Activated T-helper 2 cell treated with anti-CD3 and anti-CD28 coated beads, Interferon-gamma antibody, Interleukin-2, Interleukin-4, amounts not matched to agents 10 μg/mL and 5 μg/mL and 100 μg/mL, durations not matched to agents 14 hours and 24 hours and 36 hours (primary cell): ENCODE measurements at regions of chr11 and their contacts with region 1.

Region 1: GRCh38 chr11:47766305-47767227 is 575 bp downstream of the FNBP4 start:
- DNase-seq: peak; percentile 75
- H3K4me3 Mint-ChIP-seq: peak overlapping the region; percentile 99
- H3K27ac Mint-ChIP-seq: peak overlapping the region; percentile 99
- H3K4me1 Mint-ChIP-seq: peaks cover 14% of the 10 kb centered on the region
- H3K27me3 Mint-ChIP-seq: no peaks in the 10 kb centered on the region

Region 2: GRCh38 chr11:47269002-47269828 is 497.4 kb before region 1 on chr11:
- intact Hi-C with region 1: loop called (anchors 1 kb)
- DNase-seq: peak; percentile 80
- H3K4me3 Mint-ChIP-seq: peak overlapping the region; percentile 84
- H3K27ac Mint-ChIP-seq: peak overlapping the region; percentile 97
- H3K4me1 Mint-ChIP-seq: peaks cover 53% of the 10 kb centered on the region
- H3K27me3 Mint-ChIP-seq: no peaks in the 10 kb centered on the region

Region 3: DNA sequence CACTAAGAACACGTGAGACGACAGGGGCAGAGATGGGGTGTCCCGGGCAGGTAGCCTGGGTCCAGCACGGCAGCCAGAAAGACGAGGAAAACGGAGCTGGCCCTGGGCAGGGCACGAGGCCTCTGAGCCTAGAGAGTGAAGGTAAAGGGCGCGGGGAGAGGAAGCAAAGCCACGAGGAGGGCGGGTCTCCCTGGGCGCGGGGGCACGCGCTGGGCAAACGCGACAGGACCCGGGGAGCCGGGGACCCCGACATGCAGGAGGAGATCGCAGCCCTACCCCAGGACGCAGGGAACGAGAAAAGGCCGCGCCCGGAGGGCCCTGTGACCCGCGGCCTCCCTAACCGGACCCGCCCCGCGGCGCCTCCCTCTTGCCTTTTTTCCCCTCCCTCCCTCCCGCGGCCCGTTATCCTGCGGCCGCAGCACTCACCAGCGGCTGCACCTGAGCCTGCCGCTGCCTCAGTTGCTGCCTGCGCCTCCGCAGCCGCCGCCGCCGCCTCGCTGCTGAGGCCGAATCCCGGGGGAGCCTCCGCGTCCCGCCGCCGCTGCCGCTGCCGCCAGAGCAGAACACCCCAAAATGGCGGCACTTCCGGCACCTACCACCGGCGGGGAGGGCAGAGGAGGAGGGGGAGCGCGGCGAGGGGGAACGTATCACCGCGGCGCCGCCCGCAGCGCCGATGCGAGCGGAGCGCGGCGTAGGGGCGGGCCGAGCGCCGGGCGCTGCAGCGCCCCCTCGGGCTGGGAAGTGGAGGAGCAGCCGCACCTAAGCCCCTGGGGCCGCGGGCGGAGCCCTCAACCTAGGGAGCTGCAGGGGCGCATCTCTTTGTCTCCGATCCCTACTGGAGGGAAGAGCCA is 213.8 kb before region 1 on chr11 and contains the start of gene CELF1:
- intact Hi-C with region 1: loop called (anchors 2 kb)
- DNase-seq: peak; percentile 92
- H3K4me3 Mint-ChIP-seq: peak within 1 kb of the TSS; percentile 100
- H3K27ac Mint-ChIP-seq: peak within 1 kb of the TSS; percentile 95
- H3K4me1 Mint-ChIP-seq: peaks cover 31% of the 10 kb centered on the region
- H3K27me3 Mint-ChIP-seq: no peaks in the 10 kb centered on the region
- total RNA-seq, gene CELF1: 129 and 132 TPM in 2 replicates

Region 4: GRCh38 chr11:47715082-47715669 is 51.4 kb before region 1 on chr11 and contains the start of gene AGBL2:
- intact Hi-C with region 1: loop called (anchors 2 kb)
- DNase-seq: peak; percentile 83
- H3K4me3 Mint-ChIP-seq: peak within 1 kb of the TSS; percentile 92
- H3K27ac Mint-ChIP-seq: peak within 1 kb of the TSS; percentile 95
- H3K4me1 Mint-ChIP-seq: peaks cover 21% of the 10 kb centered on the region
- H3K27me3 Mint-ChIP-seq: no peaks in the 10 kb centered on the region
- total RNA-seq, gene AGBL2: 3.6 and 5.1 TPM in 2 replicates

Region 5: DNA sequence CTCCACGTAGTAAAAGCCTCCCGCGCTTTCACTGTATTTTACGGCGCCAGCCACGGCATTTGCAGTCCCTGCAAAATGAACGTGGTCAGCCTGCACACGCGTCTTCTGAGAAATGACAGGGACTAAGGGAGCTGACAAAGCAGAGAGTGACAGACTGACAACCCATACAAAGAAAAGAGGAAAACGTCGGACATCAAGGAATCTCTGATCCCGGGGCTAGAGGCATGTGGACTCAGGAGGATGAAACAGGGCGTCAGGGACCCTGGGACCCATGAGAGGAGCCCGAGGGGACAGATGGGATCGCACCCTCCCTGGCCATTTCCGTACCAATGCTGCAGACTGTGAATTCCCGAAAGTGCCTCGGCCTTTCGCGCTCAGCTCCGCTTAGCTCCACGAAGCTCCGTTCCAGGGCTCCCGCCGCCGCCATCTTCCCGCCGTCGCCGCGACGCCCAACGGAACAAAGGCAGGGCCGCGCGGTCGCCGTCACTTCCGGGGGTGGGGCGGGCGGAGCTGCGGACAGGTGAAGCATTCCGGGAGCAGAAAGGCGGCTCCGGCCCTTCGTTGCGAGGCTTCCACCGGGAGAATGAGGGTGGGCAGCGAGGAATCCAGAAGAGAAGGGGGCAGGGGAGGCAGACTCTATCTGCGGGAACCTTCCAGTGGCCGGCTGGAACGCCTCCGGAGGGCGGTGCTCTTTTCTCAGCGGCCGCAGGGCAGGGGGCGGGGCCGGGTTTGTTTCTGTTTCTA is 81.5 kb after region 1 on chr11 and contains the start of gene NUP160:
- intact Hi-C with region 1: loop called (anchors 1 kb)
- DNase-seq: peak; percentile 85
- H3K4me3 Mint-ChIP-seq: peak within 1 kb of the TSS; percentile 97
- H3K27ac Mint-ChIP-seq: peak within 1 kb of the TSS; percentile 98
- H3K4me1 Mint-ChIP-seq: peaks cover 33% of the 10 kb centered on the region
- H3K27me3 Mint-ChIP-seq: no peaks in the 10 kb centered on the region
- total RNA-seq, gene NUP160: 81.2 and 84.7 TPM in 2 replicates